MCF 10A (cell line): ENCODE measurements at regions of chr1 and their contacts with region 1.

Region 1: DNA sequence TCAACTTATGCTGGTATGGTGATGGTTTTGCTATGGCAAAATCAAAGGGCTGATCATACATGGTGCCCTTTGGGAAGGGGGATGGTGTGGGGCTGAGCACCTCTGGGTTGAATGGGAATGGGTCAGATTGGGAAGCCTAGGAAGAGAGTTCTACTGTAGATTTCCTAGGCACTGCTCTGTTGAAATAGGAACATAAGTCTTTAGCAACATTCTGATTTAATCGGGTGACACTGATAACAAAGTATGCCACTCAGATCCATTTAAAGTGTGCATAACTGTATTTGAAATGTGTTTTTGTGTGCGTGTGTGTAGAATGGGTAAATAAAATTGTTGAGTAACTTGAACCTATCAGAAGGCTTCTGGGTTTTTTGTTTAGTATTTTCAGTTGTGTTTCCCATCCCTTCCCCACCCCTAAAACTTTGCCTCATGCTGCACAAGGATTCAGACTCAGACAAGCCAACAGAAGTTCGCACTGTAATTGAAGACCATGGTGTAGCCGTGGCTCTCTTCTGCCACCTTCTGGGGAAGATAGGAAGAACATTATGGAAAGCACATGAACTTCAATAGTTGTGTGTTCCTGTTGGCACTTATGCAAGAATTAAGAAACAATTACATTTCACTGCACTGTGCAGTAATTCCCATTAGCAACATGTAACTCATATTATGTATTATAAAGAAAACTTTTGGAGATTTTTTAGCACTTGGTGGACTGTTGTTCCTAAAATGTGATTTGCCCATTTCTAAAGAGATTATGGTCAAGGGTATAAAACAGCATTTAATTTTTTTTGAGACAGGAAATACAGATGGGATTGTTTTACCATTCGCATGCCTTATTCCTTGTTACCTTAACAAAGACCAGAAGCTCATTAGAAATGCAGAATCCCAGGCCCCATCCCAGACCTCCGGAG is 10.9 kb upstream of the C4BPB start:
- DNase-seq: peak; percentile 96
- H3K4me3 Mint-ChIP-seq: no peak overlapping the region
- H3K27ac Mint-ChIP-seq: no peak overlapping the region
- H3K4me1 Mint-ChIP-seq: peaks cover 23% of the 10 kb centered on the region
- H3K27me3 Mint-ChIP-seq: peaks cover 7% of the 10 kb centered on the region
- CTCF ChIP-seq: peak; percentile 99

Region 2: GRCh38 chr1:206469933-206470691 is 607.6 kb before region 1 on chr1 and contains the start of gene IKBKE:
- CTCF ChIA-PET with region 1: no interaction called
- POLR2A ChIA-PET with region 1: no interaction called
- intact Hi-C with region 1: loop called (anchors 10 kb)
- DNase-seq: peak; percentile 85
- H3K4me3 Mint-ChIP-seq: peak within 1 kb of the TSS; percentile 75
- H3K27ac Mint-ChIP-seq: peak within 1 kb of the TSS; percentile 61
- H3K4me1 Mint-ChIP-seq: peaks cover 43% of the 10 kb centered on the region
- H3K27me3 Mint-ChIP-seq: peaks cover 13% of the 10 kb centered on the region
- CTCF ChIP-seq: no peak
- total RNA-seq, gene IKBKE: 7.1 and 12.1 TPM in 2 replicates

Region 3: GRCh38 chr1:206734499-206735142 is 343.1 kb before region 1 on chr1:
- CTCF ChIA-PET with region 1: interaction called, 4 read pairs
- POLR2A ChIA-PET with region 1: no interaction called
- intact Hi-C with region 1: loop called (anchors 2 kb)
- DNase-seq: peak; percentile 73
- H3K4me3 Mint-ChIP-seq: no peak overlapping the region
- H3K27ac Mint-ChIP-seq: peak overlapping the region; percentile 6
- H3K4me1 Mint-ChIP-seq: peaks cover 9% of the 10 kb centered on the region
- H3K27me3 Mint-ChIP-seq: no peaks in the 10 kb centered on the region
- CTCF ChIP-seq: peak; percentile 97

Region 4: GRCh38 chr1:206895830-206896242 is 181.9 kb before region 1 on chr1:
- CTCF ChIA-PET with region 1: no interaction called
- POLR2A ChIA-PET with region 1: no interaction called
- intact Hi-C with region 1: no loop called
- DNase-seq: peak; percentile 99
- H3K4me3 Mint-ChIP-seq: peak overlapping the region; percentile 2
- H3K27ac Mint-ChIP-seq: peak overlapping the region; percentile 89
- H3K4me1 Mint-ChIP-seq: peaks cover 71% of the 10 kb centered on the region
- H3K27me3 Mint-ChIP-seq: no peaks in the 10 kb centered on the region
- CTCF ChIP-seq: no peak

Region 5: GRCh38 chr1:207004981-207005830 is 72.5 kb before region 1 on chr1:
- CTCF ChIA-PET with region 1: interaction called, 21 read pairs
- POLR2A ChIA-PET with region 1: interaction called, 3 read pairs
- intact Hi-C with region 1: loop called (anchors 1 kb)
- DNase-seq: peak; percentile 95
- H3K4me3 Mint-ChIP-seq: peak overlapping the region; percentile 1
- H3K27ac Mint-ChIP-seq: peak overlapping the region; percentile 30
- H3K4me1 Mint-ChIP-seq: peaks cover 58% of the 10 kb centered on the region
- H3K27me3 Mint-ChIP-seq: no peaks in the 10 kb centered on the region
- CTCF ChIP-seq: peak; percentile 85

Region 6: GRCh38 chr1:207032528-207033017 is 45.2 kb before region 1 on chr1 and contains the start of gene C1orf116:
- CTCF ChIA-PET with region 1: interaction called, 43 read pairs
- POLR2A ChIA-PET with region 1: interaction called, 164 read pairs
- intact Hi-C with region 1: no loop called
- DNase-seq: peak; percentile 98
- H3K4me3 Mint-ChIP-seq: peak within 1 kb of the TSS; percentile 75
- H3K27ac Mint-ChIP-seq: peak within 1 kb of the TSS; percentile 86
- H3K4me1 Mint-ChIP-seq: peaks cover 79% of the 10 kb centered on the region
- H3K27me3 Mint-ChIP-seq: no peaks in the 10 kb centered on the region
- CTCF ChIP-seq: no peak
- total RNA-seq, gene C1orf116: 35.4 and 35.5 TPM in 2 replicates

Region 7: GRCh38 chr1:207404849-207405525 is 327.3 kb after region 1 on chr1:
- CTCF ChIA-PET with region 1: interaction called, 221 read pairs
- POLR2A ChIA-PET with region 1: interaction called, 7 read pairs
- intact Hi-C with region 1: no loop called
- DNase-seq: peak; percentile 83
- H3K4me3 Mint-ChIP-seq: no peak overlapping the region
- H3K27ac Mint-ChIP-seq: no peak overlapping the region
- H3K4me1 Mint-ChIP-seq: peaks cover 5% of the 10 kb centered on the region
- H3K27me3 Mint-ChIP-seq: no peaks in the 10 kb centered on the region
- CTCF ChIP-seq: peak; percentile 99